CD8-positive, alpha-beta memory T cell (primary cell): ENCODE measurements at regions of chr19 and their contacts with region 1.

Region 1: DNA sequence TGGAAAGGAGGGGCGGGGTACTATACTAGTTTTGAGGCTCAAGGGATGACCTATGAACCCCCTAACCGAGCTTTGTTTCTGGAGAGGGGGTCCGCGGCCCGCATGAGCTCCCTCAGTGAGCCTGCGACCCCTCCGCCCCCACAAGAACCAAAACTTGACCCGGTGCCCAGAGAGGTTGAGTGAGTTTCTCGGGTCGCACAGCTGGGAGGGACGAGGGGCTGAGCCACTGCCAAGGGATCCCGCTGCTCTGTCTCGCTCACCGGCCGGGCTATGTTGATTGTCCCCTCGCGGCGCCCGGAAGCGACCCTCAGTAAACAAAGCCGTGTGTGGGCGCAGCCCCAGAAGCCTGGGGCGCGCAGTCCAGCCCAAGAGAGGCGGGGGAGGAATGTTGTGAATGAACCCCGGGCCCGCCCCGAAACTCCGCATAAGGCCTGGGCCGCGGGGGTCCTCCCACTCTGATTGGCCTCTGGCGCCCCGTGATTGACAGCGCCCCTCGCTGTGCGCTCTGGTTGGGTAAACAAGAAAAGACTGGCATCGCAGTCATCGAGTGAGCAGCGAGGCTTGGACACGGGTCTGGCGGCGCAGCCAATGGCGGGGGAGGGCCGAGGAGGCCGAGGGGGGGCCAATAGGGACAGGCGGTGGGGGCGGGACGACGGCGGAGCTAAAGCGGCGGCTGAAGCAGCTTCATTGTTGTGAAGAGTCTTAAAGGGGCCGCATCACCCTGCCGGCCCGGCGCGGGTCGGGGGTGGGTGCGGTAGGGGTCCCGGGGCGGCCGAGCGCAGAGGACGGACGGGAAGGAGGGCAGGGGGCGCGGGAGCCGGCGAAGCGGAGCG is at the start of gene ZSWIM4:
- DNase-seq: peak; percentile 86 to 95 (median 88)
- H3K4me3 ChIP-seq: peak within 1 kb of the TSS; percentile 62
- H3K4me3 Mint-ChIP-seq: peak within 1 kb of the TSS; percentile 93 to 98 (median 96)
- H3K27ac ChIP-seq: peak within 1 kb of the TSS; percentile 73
- H3K27ac Mint-ChIP-seq: peak within 1 kb of the TSS; percentile 94 to 97 (median 95)
- H3K4me1 ChIP-seq: peaks cover 23% of the 10 kb centered on the region
- H3K4me1 Mint-ChIP-seq: peaks cover 28 to 46% (median 31%) of the 10 kb centered on the region in 3 donors
- H3K27me3 ChIP-seq: no peaks in the 10 kb centered on the region
- H3K27me3 Mint-ChIP-seq: peaks cover 0 to 2% of the 10 kb centered on the region in 2 donors
- total RNA-seq, gene ZSWIM4: 4.4 to 4.8 TPM

Region 2: GRCh38 chr19:14954071-14954659 is 1159.2 kb after region 1 on chr19:
- CTCF ChIA-PET with region 1: no interaction called
- POLR2A ChIA-PET with region 1: interaction called, 11 read pairs
- DNase-seq: no peak
- H3K4me3 ChIP-seq: no peak overlapping the region
- H3K4me3 Mint-ChIP-seq: no peak overlapping the region
- H3K27ac ChIP-seq: no peak overlapping the region
- H3K27ac Mint-ChIP-seq: no peak overlapping the region
- H3K4me1 ChIP-seq: no peaks in the 10 kb centered on the region
- H3K4me1 Mint-ChIP-seq: no peaks in the 10 kb centered on the region
- H3K27me3 ChIP-seq: no peaks in the 10 kb centered on the region
- H3K27me3 Mint-ChIP-seq: peaks cover 11 to 31% of the 10 kb centered on the region in 2 donors